GM10248 (cell line): ENCODE measurements at regions of chr22 and their contacts with region 1.

Region 1: DNA sequence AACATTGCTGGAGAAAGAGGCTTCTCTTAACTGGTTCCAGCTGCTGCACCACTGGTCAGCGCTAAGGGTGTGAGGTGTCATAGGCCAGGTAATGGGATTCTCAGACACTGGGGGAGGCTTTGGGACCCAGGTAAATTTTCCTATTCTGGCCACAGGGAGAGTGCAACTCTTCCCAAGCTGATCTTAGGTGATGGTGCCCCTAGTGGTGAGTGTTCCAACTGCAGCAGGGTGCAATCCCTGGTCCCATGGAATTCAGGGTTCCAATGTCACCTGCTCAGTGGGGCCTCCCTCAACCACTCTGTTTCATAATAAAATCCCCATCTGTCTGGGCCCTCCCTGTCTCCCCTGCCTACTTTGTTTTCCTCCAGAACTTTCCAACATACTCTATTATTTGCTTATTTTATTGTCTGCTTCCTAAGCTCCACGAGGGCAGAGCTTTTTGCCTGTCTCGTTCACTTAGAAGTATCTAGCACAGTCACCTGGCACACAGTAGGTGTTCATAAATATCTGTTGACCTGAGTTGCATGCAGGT is 2.9 kb upstream of the SGSM1 start:
- DNase-seq: peak; percentile 65
- CTCF ChIP-seq: peak; percentile 81

Region 2: GRCh38 chr22:24727218-24727851 is 75.7 kb before region 1 on chr22:
- CTCF ChIA-PET with region 1: no interaction called
- POLR2A ChIA-PET with region 1: no interaction called
- DNase-seq: no peak
- CTCF ChIP-seq: no peak

Region 3: DNA sequence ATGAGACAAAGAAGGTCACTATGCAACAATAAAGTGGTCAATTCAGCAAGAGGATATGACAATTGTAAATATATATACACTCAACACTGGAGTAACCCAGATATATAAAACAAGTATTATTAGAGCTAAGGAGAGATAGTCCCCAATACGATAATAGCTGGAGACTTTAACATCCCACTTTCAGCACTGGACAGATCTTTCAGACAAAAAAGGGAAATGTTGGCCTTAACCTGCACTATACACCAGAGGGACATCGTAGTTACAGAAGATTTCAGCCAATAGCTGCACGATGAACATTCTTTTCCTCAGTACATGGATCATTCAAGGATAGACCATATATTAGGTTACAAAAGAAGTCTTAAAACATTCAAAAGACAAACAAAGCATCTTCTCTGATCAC is 58.4 kb before region 1 on chr22:
- CTCF ChIA-PET with region 1: no interaction called
- POLR2A ChIA-PET with region 1: no interaction called
- DNase-seq: no peak
- CTCF ChIP-seq: no peak

Region 4: GRCh38 chr22:24789516-24789915 is 13.6 kb before region 1 on chr22:
- CTCF ChIA-PET with region 1: interaction called, 25 read pairs
- POLR2A ChIA-PET with region 1: no interaction called
- DNase-seq: no peak
- CTCF ChIP-seq: no peak

Region 5: DNA sequence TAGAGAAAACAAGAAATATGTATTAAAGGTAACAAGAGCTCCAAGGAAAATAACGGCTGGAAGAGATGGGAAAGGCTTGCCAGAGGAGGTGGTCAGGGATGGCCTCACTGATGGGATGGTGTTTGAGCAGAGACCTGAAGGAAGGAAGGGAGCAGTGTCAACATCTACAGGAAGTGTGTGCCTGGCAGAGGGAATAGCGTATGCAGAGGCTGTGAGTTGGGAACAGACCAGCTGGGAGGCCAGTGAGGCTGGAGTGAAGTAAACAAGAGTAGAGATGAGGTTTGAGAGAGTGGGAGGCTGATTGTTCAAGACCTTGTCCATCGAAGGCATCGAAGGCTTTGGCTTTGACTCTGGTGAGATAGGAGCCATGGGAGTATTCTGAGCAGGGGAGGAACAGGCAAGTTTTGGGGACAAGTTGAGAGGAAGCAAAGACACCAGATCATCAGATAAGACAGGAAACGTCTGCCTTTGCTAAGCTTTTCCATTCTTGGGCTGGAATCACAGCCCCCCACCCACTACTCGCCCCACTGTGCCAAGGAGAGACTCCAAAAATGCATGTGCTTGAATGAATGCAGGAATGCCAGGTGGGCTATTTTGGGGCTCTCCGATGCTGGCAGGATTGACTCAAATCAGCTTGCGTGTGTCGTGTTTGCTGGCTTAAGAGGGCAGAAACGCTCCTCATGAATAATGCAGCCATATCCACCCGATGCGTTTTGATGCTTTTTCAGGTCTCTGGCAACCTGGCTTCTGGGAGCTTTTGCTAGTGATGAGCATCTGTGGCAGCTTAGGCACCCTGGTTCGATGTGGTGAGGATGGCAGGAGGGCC is 10.1 kb after region 1 on chr22:
- CTCF ChIA-PET with region 1: interaction called, 26 read pairs
- POLR2A ChIA-PET with region 1: no interaction called
- DNase-seq: no peak
- CTCF ChIP-seq: no peak